ENCODE measurements at regions of chr12 and their contacts with region 1.

Region 1: GRCh38 chr12:49358483-49359141 is 8.7 kb upstream of the SPATS2 start:
- DNase-seq: peak; percentile 37
- H3K4me3 Mint-ChIP-seq: no peak overlapping the region
- H3K27ac Mint-ChIP-seq: no peak overlapping the region
- H3K4me1 Mint-ChIP-seq: peaks cover 10% of the 10 kb centered on the region
- H3K27me3 Mint-ChIP-seq: peaks cover 27% of the 10 kb centered on the region

Region 2: GRCh38 chr12:49515266-49515665 is 156.7 kb after region 1 on chr12:
- intact Hi-C with region 1: loop called (anchors 1 kb)
- DNase-seq: no peak
- H3K4me3 Mint-ChIP-seq: no peak overlapping the region
- H3K27ac Mint-ChIP-seq: no peak overlapping the region
- H3K4me1 Mint-ChIP-seq: peaks cover 9% of the 10 kb centered on the region
- H3K27me3 Mint-ChIP-seq: no peaks in the 10 kb centered on the region

Region 3: GRCh38 chr12:49538510-49539403 is 180.1 kb after region 1 on chr12 and contains the start of gene KCNH3:
- intact Hi-C with region 1: loop called (anchors 1 kb)
- DNase-seq: peak; percentile 80
- H3K4me3 Mint-ChIP-seq: peak within 1 kb of the TSS; percentile 70
- H3K27ac Mint-ChIP-seq: no peak within 1 kb of the TSS
- H3K4me1 Mint-ChIP-seq: no peaks in the 10 kb centered on the region
- H3K27me3 Mint-ChIP-seq: peaks cover 49% of the 10 kb centered on the region
- total RNA-seq, gene KCNH3: 0.93 and 1.6 TPM in 2 replicates

Region 4: DNA sequence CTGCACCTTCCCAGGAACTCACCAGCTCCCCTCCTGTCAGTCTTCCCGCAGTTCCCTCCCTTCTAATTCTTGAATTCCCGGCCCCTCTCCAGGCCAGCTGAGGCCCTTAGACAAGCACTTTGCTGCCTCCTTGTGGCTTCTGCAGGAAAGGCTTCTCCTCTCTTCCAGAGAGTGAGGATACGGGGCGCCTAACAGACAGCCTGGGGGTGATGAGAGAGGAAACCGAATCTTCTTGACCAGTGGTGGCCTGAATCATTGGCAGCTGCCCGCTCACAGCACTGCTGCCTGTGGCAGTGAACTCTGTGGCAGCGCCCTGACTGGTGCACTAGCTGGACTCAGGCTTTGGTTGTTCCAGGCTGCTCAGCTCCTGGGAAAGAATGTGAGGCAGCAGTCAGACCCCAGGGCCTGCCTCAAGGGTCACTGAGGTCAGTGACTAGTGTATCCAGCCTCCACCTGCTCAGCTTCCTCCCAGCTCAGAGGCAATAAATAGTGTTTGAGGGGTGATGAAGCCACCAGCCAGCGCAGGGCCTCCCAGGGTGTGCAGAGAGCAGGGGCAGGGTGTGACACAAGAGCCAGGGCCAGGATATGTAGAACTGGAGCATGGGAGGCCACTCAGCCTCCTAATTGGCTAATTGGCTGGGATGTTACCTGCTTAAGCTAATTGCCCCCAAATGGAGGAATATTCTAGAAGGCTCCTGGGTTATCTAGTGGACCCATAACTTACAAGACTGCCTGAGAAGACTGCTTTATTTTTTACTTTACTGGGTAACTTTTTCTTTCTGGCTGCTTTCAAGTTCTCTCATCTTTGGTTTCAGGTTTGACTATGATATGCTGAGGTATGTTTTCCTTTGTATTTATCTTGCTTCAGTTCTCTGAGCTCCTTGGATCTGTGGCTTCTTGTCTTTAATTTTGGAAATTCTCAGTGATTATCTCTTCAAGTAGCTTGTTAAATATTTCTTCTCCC is 222.2 kb after region 1 on chr12:
- intact Hi-C with region 1: loop called (anchors 1 kb)
- DNase-seq: peak; percentile 36
- H3K4me3 Mint-ChIP-seq: no peak overlapping the region
- H3K27ac Mint-ChIP-seq: peak overlapping the region; percentile 3
- H3K4me1 Mint-ChIP-seq: peaks cover 23% of the 10 kb centered on the region
- H3K27me3 Mint-ChIP-seq: no peaks in the 10 kb centered on the region

Region 5: DNA sequence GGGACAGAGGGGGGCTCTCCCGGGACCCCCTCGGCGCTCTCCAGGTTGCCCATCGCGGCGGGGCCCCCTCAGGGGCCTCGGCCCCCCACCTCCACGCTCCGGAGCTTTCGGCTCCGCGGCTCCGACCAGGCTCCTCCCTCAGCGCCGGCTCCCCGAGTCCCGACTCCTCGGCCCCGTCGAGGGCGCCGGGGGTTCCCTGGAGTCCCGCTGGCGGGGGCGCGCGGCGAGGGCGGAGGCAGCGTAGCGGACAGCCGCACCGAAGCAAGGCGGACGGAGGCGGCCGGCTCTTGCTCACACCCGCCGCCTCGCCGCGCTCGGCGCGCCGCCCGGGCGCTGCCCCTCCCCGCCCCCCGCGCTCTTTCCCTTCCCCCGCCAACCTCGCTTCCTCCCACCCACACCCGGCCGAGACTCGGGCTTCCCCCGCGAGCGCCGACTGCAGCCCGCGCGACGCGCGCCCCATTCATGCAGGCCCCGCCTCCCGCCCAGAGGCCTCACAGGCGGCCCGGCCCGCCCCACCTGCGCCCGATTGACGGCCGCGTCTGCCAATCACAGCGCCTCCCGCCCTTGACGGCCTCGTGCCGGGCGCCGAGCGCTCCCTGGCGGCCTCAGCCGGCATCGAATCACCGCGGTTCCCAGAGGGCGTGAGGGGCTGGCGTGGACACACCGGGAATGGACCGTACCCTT is 348.7 kb after region 1 on chr12 and contains the start of gene FMNL3:
- intact Hi-C with region 1: loop called (anchors 5 kb)
- DNase-seq: peak; percentile 98
- H3K4me3 Mint-ChIP-seq: peak within 1 kb of the TSS; percentile 96
- H3K27ac Mint-ChIP-seq: peak within 1 kb of the TSS; percentile 89
- H3K4me1 Mint-ChIP-seq: peaks cover 48% of the 10 kb centered on the region
- H3K27me3 Mint-ChIP-seq: peaks cover 20% of the 10 kb centered on the region
- total RNA-seq, gene FMNL3: 43.0 and 46.1 TPM in 2 replicates

Measured in activated T-helper 1 cell treated with anti-CD3 and anti-CD28 coated beads, Interleukin-12 subunit alpha, Interleukin-12 subunit beta, Interleukin-2, Interleukin-4 antibody, amounts not matched to agents 30 ng/mL and 10 ng/mL and 1 ng/mL, durations not matched to agents 14 hours and 24 hours and 36 hours (primary cell).